Mammary epithelial cell (primary cell): ENCODE measurements at regions of chrX and their contacts with region 1.

Region 1: GRCh38 chrX:120334603-120335002 is 23.3 kb upstream of the TMEM255A start:
- DNase-seq: no peak
- H3K4me3 ChIP-seq: no peak overlapping the region
- H3K27ac ChIP-seq: no peak overlapping the region
- H3K4me1 ChIP-seq: no peaks in the 10 kb centered on the region
- H3K27me3 ChIP-seq: no peaks in the 10 kb centered on the region
- CTCF ChIP-seq: no peak

Region 2: GRCh38 chrX:119617517-119618164 is 717.0 kb before region 1 on chrX:
- CTCF ChIA-PET with region 1: no interaction called
- dilution Hi-C with region 1: no loop called
- in situ Hi-C with region 1: no loop called
- intact Hi-C with region 1: no loop called
- DNase-seq: no peak
- H3K4me3 ChIP-seq: no peak overlapping the region
- H3K27ac ChIP-seq: no peak overlapping the region
- H3K4me1 ChIP-seq: no peaks in the 10 kb centered on the region
- H3K27me3 ChIP-seq: no peaks in the 10 kb centered on the region
- CTCF ChIP-seq: no peak

Region 3: DNA sequence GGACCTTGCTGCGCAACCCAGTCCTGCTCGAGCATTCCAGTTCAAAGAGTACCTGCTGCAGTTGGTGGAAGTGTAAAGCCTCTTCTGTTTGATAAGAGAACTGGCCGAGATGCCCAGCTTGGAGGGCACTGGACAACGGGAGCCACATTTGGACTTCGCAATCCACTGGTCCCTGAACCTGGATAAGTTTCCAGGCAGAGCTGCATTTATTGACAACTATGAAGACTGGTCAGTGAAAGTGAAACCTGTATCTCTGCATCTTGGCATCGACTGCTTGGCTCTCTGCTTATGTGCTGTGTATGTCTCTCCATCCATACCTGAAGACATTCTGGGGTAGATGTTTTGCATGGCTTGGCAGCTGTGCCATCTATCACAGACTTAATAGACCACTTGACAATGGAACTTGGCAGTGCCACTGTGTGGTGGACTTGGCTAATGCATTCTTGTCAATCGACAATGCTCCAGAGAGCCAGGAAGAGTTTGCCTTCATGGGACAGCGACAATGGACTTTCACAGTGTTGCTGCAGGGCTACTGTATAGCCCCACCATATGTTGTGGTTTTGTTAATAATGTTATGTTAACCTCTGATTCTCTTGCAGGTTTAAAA is 127.5 kb before region 1 on chrX:
- CTCF ChIA-PET with region 1: no interaction called
- dilution Hi-C with region 1: no loop called
- in situ Hi-C with region 1: no loop called
- intact Hi-C with region 1: no loop called
- DNase-seq: no peak
- H3K4me3 ChIP-seq: no peak overlapping the region
- H3K27ac ChIP-seq: no peak overlapping the region
- H3K4me1 ChIP-seq: no peaks in the 10 kb centered on the region
- H3K27me3 ChIP-seq: peaks cover 2% of the 10 kb centered on the region
- CTCF ChIP-seq: no peak

Region 4: DNA sequence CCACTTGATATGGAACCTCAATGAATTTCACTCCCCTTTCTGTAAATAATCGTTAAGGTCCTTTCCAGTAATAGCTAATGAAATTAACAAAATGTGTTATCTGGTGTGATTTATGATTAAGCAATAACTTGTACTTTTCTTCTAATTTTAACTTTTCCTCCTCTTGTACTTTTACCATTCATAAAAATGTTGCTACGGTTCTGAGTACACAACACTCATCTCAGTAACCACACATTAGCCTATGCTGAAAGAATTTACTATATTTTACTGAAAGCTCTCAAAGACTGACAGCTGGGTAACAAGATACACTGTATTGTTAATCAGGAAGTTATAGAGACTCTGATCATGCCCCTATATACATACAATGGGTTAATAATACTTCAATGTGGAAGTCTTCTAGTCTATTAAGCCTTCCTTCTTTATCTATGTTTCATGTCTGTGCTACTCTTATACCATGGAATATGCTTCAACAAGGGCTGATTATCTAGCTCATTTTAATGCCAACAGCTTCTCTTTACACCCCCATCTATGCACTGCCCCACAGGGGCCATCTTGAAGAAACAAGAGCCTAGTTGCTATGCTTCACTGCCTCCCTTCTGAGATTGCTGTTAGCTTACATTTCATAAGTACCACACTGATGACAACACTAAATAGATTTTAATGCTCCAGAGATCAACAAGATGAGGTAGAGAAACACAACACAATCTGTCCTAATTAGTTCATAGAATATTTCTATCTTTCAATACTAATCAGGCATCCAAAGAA is 95.4 kb after region 1 on chrX:
- CTCF ChIA-PET with region 1: no interaction called
- dilution Hi-C with region 1: loop called (anchors 5 kb)
- in situ Hi-C with region 1: no loop called
- intact Hi-C with region 1: no loop called
- DNase-seq: no peak
- H3K4me3 ChIP-seq: no peak overlapping the region
- H3K27ac ChIP-seq: no peak overlapping the region
- H3K4me1 ChIP-seq: peaks cover 13% of the 10 kb centered on the region
- H3K27me3 ChIP-seq: no peaks in the 10 kb centered on the region
- CTCF ChIP-seq: no peak